K562 (cell line): ENCODE measurements at regions of chr11 and their contacts with region 1.

Region 1: GRCh38 chr11:6473481-6474422 is at the start of gene TRIM3:
- DNase-seq: peak; percentile 86 to 99 (median 99)
- ATAC-seq: peak; percentile 88
- H3K4me3 ChIP-seq: peak within 1 kb of the TSS; percentile 65
- H3K27ac ChIP-seq: peak within 1 kb of the TSS; percentile 43
- H3K4me1 ChIP-seq: peaks cover 20 to 22% of the 10 kb centered on the region in 2 experiments; a peak in 4 of 5 replicates
- H3K27me3 ChIP-seq: no peaks in the 10 kb centered on the region
- CTCF ChIP-seq: peak in 2 of 3 experiments; percentile 18 to 41; a peak in 4 of 6 replicates
- EP300 ChIP-seq: no peak
- POLR2A ChIP-seq: no peak; the same call in none of the 2 replicates
- RAD21 ChIP-seq: no peak
- polyA plus RNA-seq, gene TRIM3: 0.45 to 0.81 TPM

Region 2: DNA sequence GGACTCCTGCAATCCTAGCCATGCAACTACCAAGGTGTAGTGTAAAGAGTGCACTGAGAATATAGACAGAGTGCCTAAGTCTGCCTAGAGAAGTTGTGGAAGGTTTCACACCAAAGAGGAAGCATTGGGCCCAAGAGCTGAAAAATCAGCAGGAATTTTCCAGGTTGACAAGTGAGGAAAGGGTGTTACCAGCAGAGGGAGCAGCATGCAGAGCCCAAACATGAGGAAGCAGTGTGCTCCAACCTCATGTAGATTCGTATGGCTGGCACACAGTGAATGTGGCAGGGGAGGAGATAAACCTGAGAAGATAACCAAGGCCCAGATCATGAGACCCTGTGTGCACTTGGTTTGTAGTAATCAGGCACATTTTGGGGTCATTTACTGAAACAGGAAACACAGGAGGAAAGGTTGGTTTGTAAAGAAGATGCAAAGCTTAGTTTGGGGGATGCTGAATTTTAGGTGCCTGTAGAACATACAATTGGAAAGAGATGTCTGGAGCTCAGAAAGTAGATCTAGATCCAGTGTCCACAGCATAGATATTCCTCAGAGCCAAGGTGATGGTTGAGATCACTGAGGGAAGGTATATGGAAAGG is 34.7 kb before region 1 on chr11:
- CTCF ChIA-PET with region 1: no interaction called
- POLR2A ChIA-PET with region 1: no interaction called
- in situ Hi-C with region 1: no loop called
- intact Hi-C with region 1: no loop called
- DNase-seq: peak; percentile 33 to 71 (median 56)
- ATAC-seq: peak; percentile 75
- H3K4me3 ChIP-seq: no peak overlapping the region
- H3K27ac ChIP-seq: no peak overlapping the region
- H3K4me1 ChIP-seq: peaks cover 10 to 12% of the 10 kb centered on the region in 2 experiments; a peak in 3 of 5 replicates
- H3K27me3 ChIP-seq: peaks cover 0 to 8% of the 10 kb centered on the region in 2 experiments; a peak in 1 of 5 replicates
- CTCF ChIP-seq: peak; percentile 76 to 85 (median 82)
- EP300 ChIP-seq: no peak
- POLR2A ChIP-seq: no peak
- RAD21 ChIP-seq: peak; percentile 48 to 74

Region 3: GRCh38 chr11:6498121-6498520 is 24.4 kb after region 1 on chr11:
- CTCF ChIA-PET with region 1: no interaction called
- POLR2A ChIA-PET with region 1: interaction called, 12 read pairs
- in situ Hi-C with region 1: no loop called
- intact Hi-C with region 1: no loop called
- DNase-seq: no peak
- ATAC-seq: no peak
- H3K4me3 ChIP-seq: no peak overlapping the region
- H3K27ac ChIP-seq: no peak overlapping the region
- H3K4me1 ChIP-seq: no peaks in the 10 kb centered on the region
- H3K27me3 ChIP-seq: no peaks in the 10 kb centered on the region
- CTCF ChIP-seq: no peak
- EP300 ChIP-seq: no peak
- POLR2A ChIP-seq: no peak
- RAD21 ChIP-seq: no peak